ENCODE measurements at regions of chr17 and their contacts with region 1.

Region 1: DNA sequence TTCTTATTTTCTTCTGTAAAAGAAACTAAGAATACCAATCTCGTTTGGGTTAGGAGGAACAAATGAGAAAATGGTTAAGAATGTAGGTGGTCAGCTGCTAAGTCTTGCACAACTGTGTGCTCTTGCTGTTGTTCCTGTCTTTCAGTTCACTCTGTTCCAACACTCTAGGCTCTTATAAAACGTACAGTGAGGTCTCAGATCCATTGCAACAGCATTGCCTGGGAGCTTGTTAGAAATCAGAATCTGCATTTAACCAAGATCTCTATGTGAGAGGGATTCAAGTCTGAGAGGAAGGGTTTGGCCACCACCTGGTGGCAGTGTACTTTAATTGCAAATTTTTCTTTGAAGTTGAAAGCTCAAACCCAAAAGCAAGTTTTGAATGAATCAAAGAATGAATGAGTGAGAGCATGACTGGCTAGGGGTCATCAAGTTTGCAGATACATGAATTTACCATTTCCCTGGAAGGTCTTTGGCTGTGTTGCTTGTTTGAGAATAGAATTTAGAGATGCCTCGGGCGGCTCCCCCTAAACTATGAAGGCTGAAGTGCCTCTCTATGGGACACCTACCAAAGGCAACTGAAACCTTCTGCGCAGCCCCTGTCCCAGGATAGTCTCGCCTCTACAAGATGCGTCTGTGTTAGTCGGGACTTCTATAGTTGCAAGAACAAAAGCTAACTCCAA is 2.5 kb downstream of the ALOX15B start:
- DNase-seq: peak; percentile 72
- ATAC-seq: peak; percentile 78
- H3K4me3 ChIP-seq: no peak overlapping the region
- H3K27ac ChIP-seq: no peak overlapping the region
- H3K4me1 ChIP-seq: peaks cover 0 to 6% of the 10 kb centered on the region in 2 experiments; a peak in 1 of 4 replicates
- H3K27me3 ChIP-seq: no peaks in the 10 kb centered on the region
- CTCF ChIP-seq: peak; percentile 56 to 96 (median 82)
- POLR2A ChIP-seq: no peak
- RAD21 ChIP-seq: peak; percentile 97

Region 2: DNA sequence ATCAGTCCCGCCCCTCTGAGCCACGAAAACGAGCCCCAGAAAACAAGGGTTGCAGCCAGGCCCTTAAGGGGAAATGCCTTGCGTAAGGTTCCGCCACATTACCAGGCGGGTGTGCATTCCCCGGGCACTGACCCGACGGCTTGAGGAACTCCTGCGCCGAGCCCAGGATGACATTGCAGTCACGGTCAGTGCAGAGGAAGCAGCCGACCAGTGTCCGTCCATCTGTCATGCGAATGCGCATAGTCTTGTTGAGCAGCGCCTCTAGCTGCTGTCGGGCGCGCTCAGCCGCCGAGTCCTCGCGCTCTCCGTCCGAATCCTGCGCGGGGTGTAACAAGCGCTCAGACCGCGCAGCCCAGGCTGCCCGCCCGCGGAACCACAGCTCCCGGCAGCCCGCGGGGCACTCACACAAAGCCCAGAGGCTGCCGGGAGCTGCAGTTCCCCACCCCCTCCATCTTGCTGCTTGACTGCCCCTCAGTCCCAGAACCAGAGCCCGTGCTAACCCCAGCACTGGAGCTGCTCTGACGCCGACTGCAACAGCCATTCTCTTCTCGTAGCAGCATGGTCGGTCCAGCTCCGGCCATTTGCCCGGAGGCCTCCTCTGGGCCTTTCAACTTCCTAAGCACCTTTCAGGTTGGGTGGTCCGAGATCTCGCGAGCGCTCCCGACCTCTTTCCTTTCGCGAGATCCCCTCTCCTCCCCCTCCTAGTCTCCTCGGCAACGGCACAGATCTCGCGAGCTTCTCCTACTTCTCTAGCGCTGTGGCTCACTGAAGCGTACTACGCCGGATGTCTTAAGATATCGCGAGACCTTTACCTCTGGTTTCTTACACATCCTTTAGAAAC is 184.3 kb before region 1 on chr17 and contains the start of gene NAA38:
- CTCF ChIA-PET with region 1: interaction called, 31 read pairs
- POLR2A ChIA-PET with region 1: no interaction called
- RAD21 ChIA-PET with region 1: no interaction called
- intact Hi-C with region 1: loop called (anchors 1 kb)
- DNase-seq: peak; percentile 99
- ATAC-seq: peak; percentile 85
- H3K4me3 ChIP-seq: peak within 1 kb of the TSS; percentile 67 to 94
- H3K27ac ChIP-seq: peak within 1 kb of the TSS; percentile 92
- H3K4me1 ChIP-seq: peaks cover 10 to 28% of the 10 kb centered on the region in 2 experiments; a peak in 3 of 4 replicates
- H3K27me3 ChIP-seq: no peaks in the 10 kb centered on the region
- CTCF ChIP-seq: peak; percentile 32 to 48 (median 40); a peak in 5 of 6 replicates
- POLR2A ChIP-seq: peak; percentile 12
- RAD21 ChIP-seq: peak; percentile 58
- total RNA-seq, gene NAA38: 103 TPM

Region 3: DNA sequence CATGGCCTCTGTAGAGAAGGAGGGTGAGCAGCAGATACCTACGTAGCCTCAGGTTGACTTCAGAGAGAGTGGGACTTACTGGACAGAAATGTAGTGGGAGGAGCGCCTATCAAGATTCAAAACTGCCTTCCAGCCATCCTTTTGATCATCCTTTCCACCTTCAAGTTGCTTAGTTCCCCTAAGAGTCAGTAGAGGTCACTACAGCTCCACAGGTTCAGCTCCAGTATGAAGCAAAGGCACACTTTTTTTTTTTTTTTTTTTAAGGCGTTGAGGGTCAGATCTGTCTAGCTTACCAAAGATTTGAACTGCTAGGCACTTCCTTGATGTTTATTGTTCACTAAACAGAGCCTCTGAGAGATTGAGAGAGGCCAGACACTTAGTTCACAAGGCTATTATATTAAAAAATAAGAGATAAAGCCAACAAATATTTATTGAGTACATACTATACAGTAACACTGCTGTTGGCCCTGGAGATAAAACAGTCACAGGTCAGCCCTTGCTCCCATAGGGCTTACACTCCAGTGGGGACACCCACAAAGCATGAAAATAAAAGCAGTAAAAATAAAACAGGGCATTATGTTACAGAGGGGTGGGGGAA is 128.4 kb before region 1 on chr17:
- CTCF ChIA-PET with region 1: interaction called, 55 read pairs
- POLR2A ChIA-PET with region 1: interaction called, 5 read pairs
- RAD21 ChIA-PET with region 1: interaction called in 1 of 2 experiments, 13 read pairs
- intact Hi-C with region 1: loop called (anchors 1 kb)
- DNase-seq: peak; percentile 81
- ATAC-seq: peak; percentile 83
- H3K4me3 ChIP-seq: no peak overlapping the region
- H3K27ac ChIP-seq: no peak overlapping the region
- H3K4me1 ChIP-seq: peaks cover 10 to 28% of the 10 kb centered on the region in 2 experiments; a peak in 3 of 4 replicates
- H3K27me3 ChIP-seq: no peaks in the 10 kb centered on the region
- CTCF ChIP-seq: peak; percentile 80 to 91 (median 86)
- POLR2A ChIP-seq: no peak
- RAD21 ChIP-seq: peak; percentile 92

Region 4: GRCh38 chr17:7989781-7990655 is 51.4 kb before region 1 on chr17:
- CTCF ChIA-PET with region 1: interaction called, 18 read pairs
- POLR2A ChIA-PET with region 1: interaction called, 4 read pairs
- RAD21 ChIA-PET with region 1: interaction called, 3 to 7 read pairs
- intact Hi-C with region 1: loop called (anchors 5 kb)
- DNase-seq: peak; percentile 63
- ATAC-seq: peak; percentile 88
- H3K4me3 ChIP-seq: peak overlapping the region; percentile 44 to 60
- H3K27ac ChIP-seq: peak overlapping the region; percentile 57; the same call in 1 of the 2 replicates
- H3K4me1 ChIP-seq: peaks cover 10 to 29% of the 10 kb centered on the region in 2 experiments
- H3K27me3 ChIP-seq: no peaks in the 10 kb centered on the region
- CTCF ChIP-seq: peak; percentile 83 to 94 (median 90)
- POLR2A ChIP-seq: peak; percentile 78
- RAD21 ChIP-seq: peak; percentile 69

Region 5: DNA sequence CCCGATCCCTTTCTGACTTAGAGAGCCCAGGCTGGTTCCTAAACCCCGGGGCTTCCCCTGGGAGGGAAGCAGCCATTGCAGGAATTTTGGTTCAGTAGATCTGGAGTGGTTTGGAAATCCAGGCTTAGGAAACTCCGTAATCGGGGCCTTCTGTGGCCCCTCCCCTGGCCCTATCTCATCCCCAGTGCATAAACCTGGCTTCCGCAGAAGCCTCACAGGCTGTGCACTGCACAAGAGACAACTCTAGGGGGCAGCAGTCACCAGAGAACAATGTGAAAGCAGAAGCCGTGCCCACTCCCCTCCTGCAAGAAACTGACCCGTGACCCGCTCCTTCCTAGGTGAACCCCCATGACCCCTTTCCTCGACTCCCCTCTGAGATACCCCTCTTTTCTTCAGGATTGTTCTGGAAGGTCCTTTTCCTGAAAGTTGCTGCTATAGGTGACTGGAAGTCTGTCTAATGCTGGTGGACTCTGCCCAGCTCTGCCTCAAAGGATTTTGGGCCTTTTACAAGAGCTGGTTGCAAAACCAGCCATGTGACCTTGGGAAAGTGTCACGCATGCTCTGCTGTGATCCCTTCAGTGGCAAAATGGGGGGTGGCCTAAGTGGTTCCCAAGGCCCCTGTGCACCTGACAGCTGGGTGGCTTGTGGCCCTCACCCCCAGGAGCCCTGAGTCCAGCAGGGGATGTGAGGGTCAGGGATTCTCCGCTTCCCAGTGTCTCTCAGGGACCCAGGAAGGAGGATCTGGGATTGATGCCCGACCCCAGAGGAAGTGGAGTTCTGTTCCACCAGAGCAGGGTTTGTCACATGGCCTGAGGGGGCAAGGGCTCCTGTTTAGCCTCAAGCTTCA is 24.5 kb before region 1 on chr17:
- CTCF ChIA-PET with region 1: interaction called, 28 read pairs
- POLR2A ChIA-PET with region 1: interaction called, 6 read pairs
- RAD21 ChIA-PET with region 1: no interaction called
- intact Hi-C with region 1: loop called (anchors 1 kb)
- DNase-seq: no peak
- ATAC-seq: peak; percentile 87
- H3K4me3 ChIP-seq: peak overlapping the region; percentile 50 to 65
- H3K27ac ChIP-seq: peak overlapping the region; percentile 48; the same call in 1 of the 2 replicates
- H3K4me1 ChIP-seq: peaks cover 8 to 45% of the 10 kb centered on the region in 2 experiments; a peak in 3 of 4 replicates
- H3K27me3 ChIP-seq: no peaks in the 10 kb centered on the region
- CTCF ChIP-seq: peak; percentile 74 to 88 (median 86)
- POLR2A ChIP-seq: no peak
- RAD21 ChIP-seq: peak; percentile 80

Region 6: DNA sequence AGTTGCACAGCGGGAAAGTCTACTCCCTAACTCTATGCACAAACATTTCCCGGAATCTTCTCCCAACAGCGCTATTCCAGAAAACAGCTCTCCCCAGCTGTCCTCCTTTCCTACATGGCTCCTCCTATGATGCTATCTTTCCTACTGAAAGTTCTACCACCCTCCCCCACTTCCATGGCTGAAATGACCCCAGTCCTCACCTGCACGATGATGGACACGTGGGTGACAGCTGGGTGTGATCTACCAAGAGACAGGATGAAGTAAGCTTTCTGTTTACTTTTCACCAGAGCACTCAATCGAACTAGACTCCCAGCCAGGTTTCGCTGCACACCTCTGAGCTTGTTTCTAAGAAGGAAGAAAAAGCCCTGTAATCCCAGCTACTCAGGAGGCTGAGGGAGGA is 195.8 kb after region 1 on chr17:
- CTCF ChIA-PET with region 1: no interaction called
- POLR2A ChIA-PET with region 1: no interaction called
- RAD21 ChIA-PET with region 1: no interaction called
- intact Hi-C with region 1: no loop called
- DNase-seq: no peak
- ATAC-seq: no peak
- H3K4me3 ChIP-seq: no peak overlapping the region
- H3K27ac ChIP-seq: no peak overlapping the region
- H3K4me1 ChIP-seq: no peaks in the 10 kb centered on the region
- H3K27me3 ChIP-seq: no peaks in the 10 kb centered on the region
- CTCF ChIP-seq: no peak
- POLR2A ChIP-seq: no peak
- RAD21 ChIP-seq: no peak

Region 7: DNA sequence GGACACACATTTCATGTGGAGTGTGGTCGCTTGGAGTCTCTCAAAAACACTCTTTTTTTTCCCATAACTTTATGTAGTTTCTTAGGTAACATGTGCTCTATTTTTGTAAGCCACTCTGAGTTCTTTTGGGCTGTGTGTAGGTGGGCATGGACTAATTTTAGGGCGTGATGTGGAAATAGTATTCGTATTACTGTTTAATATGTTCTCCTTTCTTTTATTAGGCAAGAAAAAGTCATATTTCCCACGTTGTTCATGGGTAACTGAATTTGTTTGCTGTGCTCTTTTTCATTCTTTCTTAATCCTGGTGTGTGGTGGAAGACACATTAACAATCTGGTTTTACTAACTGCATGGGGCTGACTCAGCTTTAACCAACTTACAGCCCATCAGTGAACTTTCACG is 421.7 kb after region 1 on chr17:
- CTCF ChIA-PET with region 1: no interaction called
- POLR2A ChIA-PET with region 1: no interaction called
- RAD21 ChIA-PET with region 1: no interaction called
- intact Hi-C with region 1: no loop called
- DNase-seq: no peak
- ATAC-seq: no peak
- H3K4me3 ChIP-seq: no peak overlapping the region
- H3K27ac ChIP-seq: no peak overlapping the region
- H3K4me1 ChIP-seq: no peaks in the 10 kb centered on the region
- H3K27me3 ChIP-seq: no peaks in the 10 kb centered on the region
- CTCF ChIP-seq: no peak
- POLR2A ChIP-seq: no peak
- RAD21 ChIP-seq: no peak